HEK293 (cell line): ENCODE measurements at regions of chr1 and their contacts with region 1.

Region 1: DNA sequence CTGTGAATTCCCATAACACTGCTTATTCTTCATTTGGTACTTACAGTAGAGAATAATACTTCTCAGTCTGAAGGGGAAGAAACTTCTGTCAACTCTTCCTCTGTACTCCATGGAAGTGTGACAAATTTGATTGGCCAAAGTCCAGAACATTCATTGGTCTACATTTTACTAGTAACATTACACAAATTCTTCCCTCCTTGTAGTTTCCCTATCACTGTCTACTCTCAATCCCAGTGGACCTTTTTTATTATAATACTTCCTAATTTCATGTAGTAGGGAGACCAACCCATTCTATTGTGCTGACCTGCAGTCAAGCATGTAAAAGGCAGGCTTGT is 74.7 kb downstream of the ALG6 start:
- H3K4me3 ChIP-seq: no peak overlapping the region
- H3K27ac ChIP-seq: no peak overlapping the region
- H3K4me1 ChIP-seq: no peaks in the 10 kb centered on the region
- CTCF ChIP-seq: no peak

Region 2: DNA sequence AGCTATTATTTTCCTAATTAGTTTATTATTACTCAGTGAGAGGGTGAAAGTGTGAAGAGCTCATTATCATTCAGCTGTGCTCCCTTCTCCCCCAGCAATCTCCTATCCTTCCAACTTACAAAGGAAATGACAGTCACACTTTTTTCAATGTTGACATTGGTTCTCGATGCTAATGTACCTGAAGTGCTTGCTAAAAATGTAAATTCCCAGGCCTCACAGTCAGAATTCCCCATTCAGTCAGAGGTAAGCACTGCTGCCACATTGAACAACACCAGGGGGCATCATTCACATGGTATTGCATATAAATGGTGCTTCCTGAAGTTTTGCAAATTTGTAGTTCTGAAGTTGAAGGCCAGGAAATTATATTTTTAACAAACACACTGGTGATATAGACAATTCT is 252.4 kb before region 1 on chr1:
- CTCF ChIA-PET with region 1: interaction called, 12 read pairs
- POLR2A ChIA-PET with region 1: no interaction called
- H3K4me3 ChIP-seq: no peak overlapping the region
- H3K27ac ChIP-seq: no peak overlapping the region
- H3K4me1 ChIP-seq: no peaks in the 10 kb centered on the region
- CTCF ChIP-seq: no peak

Region 3: GRCh38 chr1:63327417-63328139 is 114.5 kb before region 1 on chr1:
- CTCF ChIA-PET with region 1: interaction called, 22 read pairs
- POLR2A ChIA-PET with region 1: no interaction called
- H3K4me3 ChIP-seq: no peak overlapping the region
- H3K27ac ChIP-seq: no peak overlapping the region
- H3K4me1 ChIP-seq: peaks cover 5% of the 10 kb centered on the region; the same call in 1 of the 2 replicates
- CTCF ChIP-seq: peak; percentile 86

Region 4: DNA sequence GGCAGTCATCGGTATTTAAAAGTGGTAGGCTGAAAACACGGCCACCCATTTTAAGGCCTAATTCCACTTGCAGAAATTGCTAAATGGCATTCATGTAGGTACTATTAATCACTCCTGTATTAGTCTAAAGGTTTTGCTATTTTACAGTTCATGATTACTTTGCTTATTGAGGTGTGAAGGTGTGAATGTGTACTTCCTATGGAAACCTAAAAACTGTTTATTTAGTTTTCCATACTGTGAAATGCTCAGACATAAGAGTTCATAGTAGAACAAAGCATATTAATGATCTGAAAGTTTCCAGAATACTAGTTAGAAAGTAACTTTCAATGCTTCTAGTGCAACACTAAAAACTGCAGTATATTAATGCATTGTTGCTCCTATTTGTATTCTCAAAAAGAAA is 11.1 kb after region 1 on chr1:
- CTCF ChIA-PET with region 1: interaction called, 14 read pairs
- POLR2A ChIA-PET with region 1: no interaction called
- H3K4me3 ChIP-seq: no peak overlapping the region
- H3K27ac ChIP-seq: no peak overlapping the region
- H3K4me1 ChIP-seq: no peaks in the 10 kb centered on the region
- CTCF ChIP-seq: no peak